Activated CD8-positive, alpha-beta memory T cell treated with anti-CD3 and anti-CD28 coated beads, Interleukin-2, amount 10 ng/mL, durations not matched to agents 7 days and 5 days (primary cell): ENCODE measurements at regions of chr3 and their contacts with region 1.

Region 1: DNA sequence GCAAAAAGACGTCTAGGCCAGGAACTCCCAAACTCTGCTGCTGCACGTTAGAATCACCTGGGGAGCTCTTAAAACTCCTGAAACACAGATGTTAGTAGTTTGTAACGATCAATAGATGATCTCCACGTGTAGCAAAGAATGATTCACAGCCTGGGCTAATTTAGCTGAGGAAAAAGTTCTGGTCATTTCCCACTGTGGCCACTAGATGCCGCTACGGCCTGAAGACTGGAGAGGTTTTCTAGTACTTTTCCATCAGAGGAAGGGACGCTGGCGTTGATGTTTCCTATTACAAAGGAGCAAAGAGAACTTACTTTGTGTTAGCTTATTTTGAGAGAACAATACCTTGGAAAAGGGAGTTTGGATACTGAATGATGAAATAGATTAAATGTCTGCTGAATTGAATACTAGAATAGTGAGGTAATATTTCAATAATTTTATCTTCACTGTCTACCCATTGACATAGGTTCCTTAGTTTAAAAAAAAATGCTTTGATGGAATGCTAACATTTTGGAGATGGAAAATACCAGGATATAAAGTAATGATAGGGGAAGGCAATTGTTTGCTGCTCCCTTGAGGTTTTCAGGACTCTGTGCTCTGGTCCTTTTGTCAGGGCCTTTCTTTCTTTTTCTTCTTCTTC is 159.1 kb downstream of the P3H2 start:
- DNase-seq: peak; percentile 77
- ATAC-seq: peak; percentile 57
- H3K4me3 Mint-ChIP-seq: no peak overlapping the region
- H3K27ac Mint-ChIP-seq: no peak overlapping the region
- H3K4me1 Mint-ChIP-seq: peaks cover 4% of the 10 kb centered on the region
- H3K27me3 Mint-ChIP-seq: peaks cover 10% of the 10 kb centered on the region

Region 2: DNA sequence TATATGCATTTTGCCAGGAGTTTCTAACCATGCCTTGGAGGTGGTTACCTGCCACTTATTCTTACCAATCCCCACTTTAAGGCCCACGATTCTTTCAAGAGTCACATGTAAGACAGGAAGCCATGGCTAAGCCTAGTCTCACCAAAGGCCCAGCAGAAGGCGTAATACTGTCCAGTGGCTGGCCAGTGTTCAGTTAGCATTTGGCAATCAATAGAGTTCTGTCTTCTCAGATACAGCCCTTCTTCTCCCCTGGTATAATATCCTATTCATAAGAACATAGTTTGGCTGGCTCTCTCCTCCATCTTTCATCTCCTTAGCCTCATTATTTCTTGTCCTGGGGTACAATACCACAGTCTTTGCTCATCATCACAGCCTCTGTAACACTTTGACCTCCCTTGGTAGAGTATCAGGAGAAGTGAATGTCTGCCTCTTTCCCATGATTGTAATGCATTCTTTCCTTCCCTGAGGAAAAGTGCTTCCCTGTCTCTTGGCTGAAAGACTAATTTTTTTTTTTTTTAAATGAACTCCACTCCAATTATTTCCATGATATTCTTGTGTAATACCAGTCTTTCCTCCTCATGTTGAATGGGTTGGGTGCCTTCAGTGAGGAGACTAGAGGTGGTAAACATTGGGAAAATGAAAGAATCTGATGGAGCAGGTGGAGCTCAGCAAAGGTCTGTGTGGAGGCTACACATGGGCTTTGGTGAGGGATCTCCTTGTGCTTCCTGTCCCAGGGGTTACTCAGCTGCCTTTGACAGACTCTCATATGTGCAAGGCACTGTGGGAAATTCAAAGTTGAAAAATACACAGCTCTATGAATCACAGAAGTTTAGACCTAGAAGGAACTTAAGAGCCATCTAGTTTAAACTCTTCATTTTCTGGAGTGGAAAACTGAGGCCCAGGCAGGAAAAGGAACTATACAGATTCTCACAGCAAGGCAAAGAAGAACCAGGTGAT is 59.1 kb before region 1 on chr3:
- CTCF ChIA-PET with region 1: no interaction called
- DNase-seq: no peak
- ATAC-seq: no peak
- H3K4me3 Mint-ChIP-seq: no peak overlapping the region
- H3K27ac Mint-ChIP-seq: no peak overlapping the region
- H3K4me1 Mint-ChIP-seq: no peaks in the 10 kb centered on the region
- H3K27me3 Mint-ChIP-seq: peaks cover 3% of the 10 kb centered on the region

Region 3: GRCh38 chr3:189947948-189948723 is 13.5 kb before region 1 on chr3:
- CTCF ChIA-PET with region 1: interaction called, 25 read pairs
- DNase-seq: no peak
- ATAC-seq: no peak
- H3K4me3 Mint-ChIP-seq: no peak overlapping the region
- H3K27ac Mint-ChIP-seq: peak overlapping the region; percentile 0
- H3K4me1 Mint-ChIP-seq: peaks cover 4% of the 10 kb centered on the region
- H3K27me3 Mint-ChIP-seq: peaks cover 8% of the 10 kb centered on the region

Region 4: DNA sequence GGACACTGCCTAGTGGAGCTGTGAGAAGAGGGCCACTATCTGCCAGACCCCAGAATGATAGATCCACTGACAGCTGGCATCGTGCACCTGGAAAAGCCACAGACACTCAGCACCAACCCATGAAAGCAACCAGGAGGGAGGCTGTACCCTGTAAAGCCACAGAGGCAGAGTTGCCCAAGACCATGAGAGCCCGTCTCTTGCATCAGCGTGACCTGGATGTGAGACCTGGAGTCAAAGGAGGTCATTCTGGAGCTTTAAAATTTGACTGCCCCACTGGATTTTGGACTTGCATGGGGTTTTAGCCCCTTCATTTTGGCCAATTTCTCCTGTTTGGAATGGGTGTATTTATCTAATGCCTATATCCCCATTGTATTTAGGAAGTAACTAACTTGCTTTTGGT is 242.6 kb after region 1 on chr3:
- CTCF ChIA-PET with region 1: interaction called, 25 read pairs
- DNase-seq: no peak
- ATAC-seq: no peak
- H3K4me3 Mint-ChIP-seq: no peak overlapping the region
- H3K27ac Mint-ChIP-seq: no peak overlapping the region
- H3K4me1 Mint-ChIP-seq: peaks cover 9% of the 10 kb centered on the region
- H3K27me3 Mint-ChIP-seq: peaks cover 4% of the 10 kb centered on the region

Region 5: GRCh38 chr3:190424478-190425439 is 463.1 kb after region 1 on chr3:
- CTCF ChIA-PET with region 1: interaction called, 14 read pairs
- DNase-seq: peak; percentile 44
- ATAC-seq: peak; percentile 53
- H3K4me3 Mint-ChIP-seq: no peak overlapping the region
- H3K27ac Mint-ChIP-seq: peak overlapping the region; percentile 28
- H3K4me1 Mint-ChIP-seq: peaks cover 6% of the 10 kb centered on the region
- H3K27me3 Mint-ChIP-seq: peaks cover 8% of the 10 kb centered on the region